Activated CD8-positive, alpha-beta T cell treated with anti-CD3 and anti-CD28 coated beads for 36 hours (primary cell): ENCODE measurements at regions of chr7 and their contacts with region 1.

Region 1: GRCh38 chr7:36670585-36671431 is 53.5 kb downstream of the AOAH start:
- DNase-seq: peak; percentile 78
- ATAC-seq: peak; percentile 78
- H3K4me3 Mint-ChIP-seq: no peak overlapping the region
- H3K27ac Mint-ChIP-seq: peak overlapping the region; percentile 82
- H3K4me1 Mint-ChIP-seq: peaks cover 67% of the 10 kb centered on the region
- H3K27me3 Mint-ChIP-seq: no peaks in the 10 kb centered on the region
- CTCF ChIP-seq: peak; percentile 87

Region 2: DNA sequence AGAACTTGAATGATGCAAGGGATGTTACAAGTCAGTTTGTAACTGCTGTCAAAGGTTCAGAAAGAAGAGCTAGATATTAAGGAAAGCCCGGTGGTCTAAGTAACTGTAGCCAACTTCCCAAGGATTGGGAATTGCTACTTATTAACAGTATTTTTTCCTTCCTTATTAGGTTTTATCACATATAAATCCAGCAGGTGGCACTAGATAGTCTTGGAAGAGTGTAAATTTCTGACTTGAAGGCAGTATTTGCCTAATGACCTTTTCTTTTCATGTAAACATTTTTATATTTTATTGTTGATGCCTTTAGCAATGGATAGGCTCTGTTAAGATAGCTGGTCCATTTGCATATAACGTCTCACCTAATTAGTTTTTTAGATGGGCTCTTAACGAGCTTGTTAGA is 229.9 kb before region 1 on chr7:
- CTCF ChIA-PET with region 1: interaction called, 17 read pairs
- POLR2A ChIA-PET with region 1: no interaction called
- intact Hi-C with region 1: no loop called
- DNase-seq: no peak
- ATAC-seq: no peak
- H3K4me3 Mint-ChIP-seq: no peak overlapping the region
- H3K27ac Mint-ChIP-seq: no peak overlapping the region
- H3K4me1 Mint-ChIP-seq: no peaks in the 10 kb centered on the region
- H3K27me3 Mint-ChIP-seq: no peaks in the 10 kb centered on the region
- CTCF ChIP-seq: peak; percentile 49

Region 3: GRCh38 chr7:36600869-36601530 is 69.8 kb before region 1 on chr7:
- CTCF ChIA-PET with region 1: interaction called, 5 read pairs
- POLR2A ChIA-PET with region 1: no interaction called
- intact Hi-C with region 1: loop called (anchors 5 kb)
- DNase-seq: peak; percentile 53
- ATAC-seq: peak; percentile 89
- H3K4me3 Mint-ChIP-seq: no peak overlapping the region
- H3K27ac Mint-ChIP-seq: peak overlapping the region; percentile 79
- H3K4me1 Mint-ChIP-seq: peaks cover 70% of the 10 kb centered on the region
- H3K27me3 Mint-ChIP-seq: no peaks in the 10 kb centered on the region
- CTCF ChIP-seq: no peak

Region 4: GRCh38 chr7:36639826-36640225 is 31.0 kb before region 1 on chr7:
- CTCF ChIA-PET with region 1: interaction called, 15 read pairs
- POLR2A ChIA-PET with region 1: no interaction called
- intact Hi-C with region 1: no loop called
- DNase-seq: peak; percentile 74
- ATAC-seq: peak; percentile 90
- H3K4me3 Mint-ChIP-seq: peak overlapping the region; percentile 24
- H3K27ac Mint-ChIP-seq: peak overlapping the region; percentile 89
- H3K4me1 Mint-ChIP-seq: peaks cover 84% of the 10 kb centered on the region
- H3K27me3 Mint-ChIP-seq: no peaks in the 10 kb centered on the region
- CTCF ChIP-seq: no peak

Region 5: DNA sequence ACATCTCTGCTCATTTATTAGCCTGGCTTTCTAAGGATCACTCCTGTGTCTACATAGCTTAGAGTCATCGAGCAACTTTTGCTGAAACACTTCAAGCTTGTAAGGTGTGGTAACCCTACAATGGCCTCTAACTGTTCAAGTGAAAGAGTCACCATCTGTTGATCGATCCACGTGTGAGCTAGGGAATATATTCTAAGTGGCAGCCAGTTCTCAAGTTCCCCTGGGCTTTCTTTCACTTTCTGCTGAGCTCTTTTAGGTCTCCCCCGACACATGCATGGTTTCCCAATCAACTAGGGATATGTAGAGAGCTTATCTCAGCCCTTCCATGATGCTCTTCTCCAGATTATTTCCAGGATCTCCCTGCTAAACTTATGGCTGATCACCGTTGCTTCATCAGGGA is 38.0 kb after region 1 on chr7:
- CTCF ChIA-PET with region 1: interaction called, 11 read pairs
- POLR2A ChIA-PET with region 1: no interaction called
- intact Hi-C with region 1: no loop called
- DNase-seq: no peak
- ATAC-seq: no peak
- H3K4me3 Mint-ChIP-seq: peak overlapping the region; percentile 15
- H3K27ac Mint-ChIP-seq: peak overlapping the region; percentile 76
- H3K4me1 Mint-ChIP-seq: peaks cover 78% of the 10 kb centered on the region
- H3K27me3 Mint-ChIP-seq: no peaks in the 10 kb centered on the region
- CTCF ChIP-seq: no peak